ENCODE measurements at regions of chr16 and their contacts with region 1.

Region 1: GRCh38 chr16:50797456-50797855 is 55.6 kb downstream of the CYLD start:
- DNase-seq: no peak
- H3K4me3 ChIP-seq: no peak overlapping the region
- H3K4me3 Mint-ChIP-seq: no peak overlapping the region
- H3K27ac ChIP-seq: no peak overlapping the region
- H3K27ac Mint-ChIP-seq: peak overlapping the region in 6 of 8 donors; percentile 1 to 83 (median 30)
- H3K4me1 ChIP-seq: no peaks in the 10 kb centered on the region
- H3K4me1 Mint-ChIP-seq: peaks cover 4 to 24% (median 4%) of the 10 kb centered on the region in 3 donors
- H3K27me3 ChIP-seq: no peaks in the 10 kb centered on the region
- H3K27me3 Mint-ChIP-seq: no peaks in the 10 kb centered on the region

Region 2: GRCh38 chr16:50259334-50260205 is 537.9 kb before region 1 on chr16:
- CTCF ChIA-PET with region 1: no interaction called
- POLR2A ChIA-PET with region 1: interaction called, 11 read pairs
- DNase-seq: peak in 1 of 5 donors; percentile 34
- H3K4me3 ChIP-seq: no peak overlapping the region
- H3K4me3 Mint-ChIP-seq: no peak overlapping the region
- H3K27ac ChIP-seq: no peak overlapping the region
- H3K27ac Mint-ChIP-seq: peak overlapping the region in 3 of 8 donors; percentile 3 to 92 (median 13)
- H3K4me1 ChIP-seq: peaks cover 8% of the 10 kb centered on the region
- H3K4me1 Mint-ChIP-seq: peaks cover 12 to 26% (median 17%) of the 10 kb centered on the region in 3 donors
- H3K27me3 ChIP-seq: no peaks in the 10 kb centered on the region
- H3K27me3 Mint-ChIP-seq: peaks cover 0 to 1% of the 10 kb centered on the region in 2 donors